ENCODE measurements at regions of chr19 and their contacts with region 1.

Region 1: DNA sequence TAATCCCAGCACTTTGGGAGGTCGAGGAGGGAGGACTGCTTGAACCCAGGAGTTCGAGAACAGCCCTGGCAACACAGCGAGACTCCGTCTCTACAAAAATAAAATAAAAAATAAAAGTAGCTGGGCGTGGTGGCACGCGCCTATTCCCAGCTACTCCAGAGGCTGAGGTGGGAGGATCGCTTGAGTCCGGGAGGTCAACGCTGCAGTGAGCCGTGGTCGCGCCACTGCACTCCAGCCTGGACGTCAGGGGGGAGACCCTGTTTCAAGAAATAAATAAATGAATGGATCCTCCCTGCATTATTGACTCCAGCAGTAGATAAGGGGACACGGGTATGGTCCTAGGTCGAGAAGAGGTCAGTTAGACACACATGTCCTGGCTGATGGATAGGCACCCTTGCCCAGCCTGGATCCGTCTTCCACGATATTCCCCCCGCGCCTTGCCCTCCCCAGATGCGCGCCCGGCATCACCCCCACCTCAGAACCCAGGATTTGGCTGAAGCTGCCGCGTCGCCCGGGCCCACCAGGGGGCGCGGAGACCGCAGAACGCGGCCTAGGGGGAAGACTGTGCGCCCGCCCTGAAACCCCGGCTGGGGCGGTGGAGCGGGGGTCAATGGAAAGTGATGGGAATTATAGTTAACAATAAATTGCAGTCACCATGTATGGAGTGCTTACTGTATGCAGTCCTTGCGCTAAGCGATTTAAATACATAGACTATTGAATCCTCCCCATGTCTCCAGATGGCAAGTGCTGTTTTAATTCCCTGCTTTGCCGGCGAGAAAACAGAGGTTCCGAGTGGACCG is 2.1 kb upstream of the HOOK2 start:
- DNase-seq: peak; percentile 67 to 97 (median 82)

Region 2: DNA sequence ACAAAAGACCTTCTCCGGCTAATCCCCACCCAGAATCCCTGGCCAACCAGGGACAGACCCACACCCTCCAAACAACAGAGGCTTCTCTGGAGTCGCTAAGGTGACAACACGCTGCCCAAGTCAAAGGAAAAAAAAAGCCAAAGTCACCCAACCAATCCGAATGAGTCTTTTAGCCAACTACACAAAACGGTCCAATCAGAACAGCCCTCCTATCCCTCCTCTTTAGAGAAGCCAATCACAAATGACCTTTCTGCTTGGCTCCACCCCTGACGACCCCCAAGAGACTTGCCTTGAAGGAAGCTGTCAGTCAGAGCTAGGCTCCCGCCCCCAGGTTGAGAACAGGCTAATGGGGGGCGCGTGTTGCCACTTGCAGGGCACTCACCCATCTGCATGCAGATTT is 74.4 kb before region 1 on chr19:
- intact Hi-C with region 1: no loop called
- DNase-seq: no peak

Region 3: DNA sequence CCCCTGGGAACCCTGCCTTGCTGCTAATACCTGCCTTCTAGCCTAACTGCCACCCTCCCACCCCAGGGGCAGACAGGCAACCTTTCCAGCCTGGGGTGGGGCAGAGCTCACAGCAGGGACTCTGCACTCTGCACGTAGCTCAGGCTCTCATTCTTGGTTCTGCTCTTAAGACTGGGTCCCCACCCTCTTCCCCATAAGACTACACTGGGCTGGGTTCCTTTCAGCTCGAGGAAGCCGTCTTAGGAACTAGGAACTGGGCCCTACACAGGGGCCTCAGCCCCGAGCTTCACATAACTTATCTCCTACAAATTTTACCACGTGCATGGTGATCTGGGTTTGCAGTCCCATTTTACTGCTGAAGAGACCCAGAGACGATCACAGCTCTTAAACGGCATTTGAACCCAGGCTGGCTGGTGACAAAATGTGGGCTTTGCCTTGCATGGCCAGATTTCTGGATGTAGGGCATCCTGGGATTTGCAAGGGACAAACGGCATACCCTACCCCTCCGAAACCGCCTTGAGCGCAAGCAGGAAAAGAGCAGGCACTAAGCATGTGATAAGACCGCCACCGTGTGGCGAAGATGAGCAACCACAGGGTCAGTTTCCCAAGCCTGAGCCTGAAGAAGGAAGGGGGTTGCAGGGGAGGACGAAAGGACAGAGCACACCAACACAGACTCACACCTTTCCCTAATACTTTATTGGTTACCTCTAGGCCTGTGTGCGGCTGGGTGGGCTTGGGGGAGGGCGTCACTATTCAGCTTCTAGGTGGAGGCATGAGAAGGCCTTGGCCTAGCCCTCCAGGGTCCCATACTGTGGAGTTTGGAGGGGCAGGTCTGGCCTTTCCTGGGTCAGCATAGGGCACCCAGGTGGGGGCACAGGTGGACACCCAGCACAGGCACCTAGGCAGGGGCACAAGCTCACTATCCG is 19.0 kb after region 1 on chr19:
- intact Hi-C with region 1: loop called (anchors 1 kb)
- DNase-seq: peak; percentile 51 to 96 (median 79)

Region 4: GRCh38 chr19:12847159-12848139 is 70.0 kb after region 1 on chr19:
- intact Hi-C with region 1: loop called (anchors 5 kb)
- DNase-seq: peak; percentile 74 to 97 (median 86)